Naive thymus-derived CD4-positive, alpha-beta T cell (primary cell): ENCODE measurements at regions of chr12 and their contacts with region 1.

Region 1: DNA sequence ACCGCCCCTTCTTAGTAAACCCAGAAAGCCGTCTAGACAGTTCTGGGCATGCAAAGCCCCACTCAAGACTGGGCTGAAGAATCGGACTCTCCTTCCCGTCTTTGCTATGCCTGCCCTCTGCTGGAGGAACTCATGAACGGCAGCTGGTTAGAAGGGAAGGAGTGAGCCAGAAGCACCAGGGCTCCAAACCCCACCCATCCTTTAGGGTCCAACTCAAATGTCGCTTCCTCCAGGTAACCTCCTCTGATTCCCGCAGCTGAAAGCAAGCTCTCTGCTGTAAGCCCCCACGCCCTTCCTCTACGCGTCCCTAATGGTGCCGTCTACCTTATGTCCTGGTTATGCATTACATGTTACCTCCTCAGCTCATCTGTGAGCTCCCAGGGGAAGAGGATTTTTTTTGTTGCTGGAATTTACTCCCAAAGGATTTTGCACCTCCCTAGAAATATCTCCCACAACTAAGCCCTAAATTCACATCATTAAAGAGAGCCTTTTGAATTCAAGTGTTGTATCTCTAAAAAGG is 59.0 kb upstream of the SCN8A start:
- DNase-seq: peak; percentile 44 to 78 (median 68)
- ATAC-seq: peak; percentile 94
- H3K4me3 ChIP-seq: no peak overlapping the region
- H3K4me3 Mint-ChIP-seq: no peak overlapping the region
- H3K27ac ChIP-seq: no peak overlapping the region
- H3K27ac Mint-ChIP-seq: peak overlapping the region in 5 of 9 donors; percentile 11 to 52 (median 32)
- H3K4me1 ChIP-seq: peaks cover 0 to 4% of the 10 kb centered on the region in 2 donors
- H3K4me1 Mint-ChIP-seq: peaks cover 0 to 11% (median 6%) of the 10 kb centered on the region in 7 donors
- H3K27me3 ChIP-seq: no peaks in the 10 kb centered on the region
- H3K27me3 Mint-ChIP-seq: peaks cover 0 to 32% (median 4%) of the 10 kb centered on the region in 5 donors

Region 2: GRCh38 chr12:51270067-51270970 is 261.7 kb before region 1 on chr12 and contains the start of gene SMAGP:
- CTCF ChIA-PET with region 1: no interaction called
- POLR2A ChIA-PET with region 1: no interaction called
- intact Hi-C with region 1: loop called in 1 of 2 experiments (anchors 1 kb)
- DNase-seq: peak; percentile 13 to 62 (median 36)
- ATAC-seq: peak; percentile 68
- H3K4me3 ChIP-seq: peak within 1 kb of the TSS; percentile 57
- H3K4me3 Mint-ChIP-seq: peak within 1 kb of the TSS; percentile 90 to 98 (median 94)
- H3K27ac ChIP-seq: peak within 1 kb of the TSS; percentile 62
- H3K27ac Mint-ChIP-seq: peak within 1 kb of the TSS; percentile 55 to 96 (median 90)
- H3K4me1 ChIP-seq: peaks cover 5 to 20% of the 10 kb centered on the region in 2 donors
- H3K4me1 Mint-ChIP-seq: peaks cover 19 to 29% (median 24%) of the 10 kb centered on the region in 7 donors
- H3K27me3 ChIP-seq: no peaks in the 10 kb centered on the region
- H3K27me3 Mint-ChIP-seq: peaks cover 0 to 34% (median 0%) of the 10 kb centered on the region in 5 donors
- total RNA-seq, gene SMAGP: 1.5 to 7.4 (median 4.2) TPM

Region 3: DNA sequence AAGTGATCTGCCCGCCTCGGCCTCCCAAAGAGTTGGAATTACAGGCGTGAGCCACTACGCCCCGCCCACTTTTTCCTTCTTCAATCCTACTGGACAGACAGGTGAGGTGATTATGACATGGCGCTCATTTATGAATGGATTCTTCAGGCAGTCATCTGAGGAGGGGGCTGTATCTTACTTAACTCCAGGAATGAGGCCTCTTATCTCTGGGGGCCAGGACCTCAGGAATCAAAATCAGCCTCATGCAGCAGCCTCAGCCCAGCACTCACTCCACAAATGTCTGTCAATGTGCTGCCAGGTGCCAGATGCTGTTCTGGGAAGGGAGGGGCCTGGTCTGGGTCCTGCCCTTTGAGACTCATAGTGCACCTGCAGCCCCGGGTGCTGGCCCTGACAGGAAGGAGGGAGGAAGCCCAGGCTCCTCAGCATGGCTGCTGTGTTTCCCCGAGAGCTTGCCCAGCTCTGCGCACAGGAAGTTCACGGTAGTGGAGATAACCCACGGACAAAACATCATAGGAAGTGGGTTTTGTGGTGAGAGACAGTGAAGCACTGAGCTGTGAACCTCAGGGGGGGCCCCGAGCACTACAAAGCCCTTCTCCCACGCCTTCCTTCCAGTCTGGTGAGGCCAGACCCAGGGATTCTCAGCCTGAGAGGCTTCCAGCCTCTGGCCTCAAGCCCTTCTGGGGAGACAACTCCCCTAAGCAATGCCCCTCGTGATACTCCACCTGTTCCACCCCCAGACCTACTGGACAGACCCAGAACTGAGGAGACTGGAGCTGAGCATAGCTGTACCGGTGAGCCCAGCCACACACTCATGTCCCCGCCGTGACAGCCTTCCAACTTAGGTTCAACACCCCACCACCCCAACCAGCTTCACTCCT is 163.2 kb before region 1 on chr12:
- CTCF ChIA-PET with region 1: no interaction called
- POLR2A ChIA-PET with region 1: interaction called, 3 read pairs
- intact Hi-C with region 1: loop called in 1 of 2 experiments (anchors 1 kb)
- DNase-seq: peak; percentile 53 to 96 (median 95)
- ATAC-seq: peak; percentile 96
- H3K4me3 ChIP-seq: peak overlapping the region; percentile 57
- H3K4me3 Mint-ChIP-seq: peak overlapping the region; percentile 62 to 89 (median 80)
- H3K27ac ChIP-seq: peak overlapping the region; percentile 73
- H3K27ac Mint-ChIP-seq: peak overlapping the region; percentile 6 to 96 (median 91)
- H3K4me1 ChIP-seq: peaks cover 24 to 35% of the 10 kb centered on the region in 2 donors
- H3K4me1 Mint-ChIP-seq: peaks cover 38 to 72% (median 54%) of the 10 kb centered on the region in 7 donors
- H3K27me3 ChIP-seq: no peaks in the 10 kb centered on the region
- H3K27me3 Mint-ChIP-seq: peaks cover 0 to 5% (median 0%) of the 10 kb centered on the region in 5 donors

Region 4: GRCh38 chr12:51482929-51483697 is 48.9 kb before region 1 on chr12:
- CTCF ChIA-PET with region 1: no interaction called
- POLR2A ChIA-PET with region 1: no interaction called
- intact Hi-C with region 1: loop called (anchors 1 to 5 kb)
- DNase-seq: peak in 8 of 9 donors; percentile 30 to 67 (median 50)
- ATAC-seq: peak; percentile 54
- H3K4me3 ChIP-seq: peak overlapping the region; percentile 28
- H3K4me3 Mint-ChIP-seq: peak overlapping the region; percentile 31 to 88 (median 76)
- H3K27ac ChIP-seq: peak overlapping the region; percentile 42
- H3K27ac Mint-ChIP-seq: peak overlapping the region; percentile 79 to 97 (median 90)
- H3K4me1 ChIP-seq: peaks cover 19 to 32% of the 10 kb centered on the region in 2 donors
- H3K4me1 Mint-ChIP-seq: peaks cover 17 to 54% (median 53%) of the 10 kb centered on the region in 7 donors
- H3K27me3 ChIP-seq: no peaks in the 10 kb centered on the region
- H3K27me3 Mint-ChIP-seq: no peaks in the 10 kb centered on the region

Region 5: DNA sequence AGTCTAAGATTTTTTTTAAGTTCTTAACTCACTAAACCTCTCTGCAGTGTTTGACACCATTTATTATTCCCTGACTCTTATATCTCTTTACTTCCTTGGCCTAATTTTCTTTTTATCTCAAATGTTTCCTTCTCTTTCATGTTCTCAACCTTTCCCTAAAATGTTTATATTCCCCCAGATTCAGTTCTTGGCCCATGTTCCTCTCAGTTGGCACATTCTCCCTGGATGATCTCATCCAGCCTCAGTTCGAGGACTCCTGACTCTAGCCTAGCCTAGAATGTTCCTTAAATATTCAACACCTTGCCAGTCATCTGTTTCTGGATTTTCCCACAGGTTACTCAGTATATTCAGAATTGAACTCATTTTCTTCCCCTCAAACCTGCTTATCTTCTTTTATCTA is 140.3 kb after region 1 on chr12:
- CTCF ChIA-PET with region 1: no interaction called
- POLR2A ChIA-PET with region 1: no interaction called
- intact Hi-C with region 1: no loop called
- DNase-seq: no peak
- ATAC-seq: no peak
- H3K4me3 ChIP-seq: no peak overlapping the region
- H3K4me3 Mint-ChIP-seq: no peak overlapping the region
- H3K27ac ChIP-seq: no peak overlapping the region
- H3K27ac Mint-ChIP-seq: no peak overlapping the region
- H3K4me1 ChIP-seq: no peaks in the 10 kb centered on the region
- H3K4me1 Mint-ChIP-seq: peaks cover 4 to 17% (median 9%) of the 10 kb centered on the region in 7 donors
- H3K27me3 ChIP-seq: no peaks in the 10 kb centered on the region
- H3K27me3 Mint-ChIP-seq: peaks cover 0 to 32% (median 0%) of the 10 kb centered on the region in 5 donors

Region 6: GRCh38 chr12:51879102-51879501 is 347.1 kb after region 1 on chr12:
- CTCF ChIA-PET with region 1: no interaction called
- POLR2A ChIA-PET with region 1: no interaction called
- intact Hi-C with region 1: loop called in 1 of 2 experiments (anchors 5 kb)
- DNase-seq: no peak
- ATAC-seq: no peak
- H3K4me3 ChIP-seq: no peak overlapping the region
- H3K4me3 Mint-ChIP-seq: no peak overlapping the region
- H3K27ac ChIP-seq: no peak overlapping the region
- H3K27ac Mint-ChIP-seq: no peak overlapping the region
- H3K4me1 ChIP-seq: no peaks in the 10 kb centered on the region
- H3K4me1 Mint-ChIP-seq: peaks cover 0 to 4% (median 0%) of the 10 kb centered on the region in 7 donors
- H3K27me3 ChIP-seq: no peaks in the 10 kb centered on the region
- H3K27me3 Mint-ChIP-seq: peaks cover 0 to 9% (median 0%) of the 10 kb centered on the region in 5 donors